K562 (cell line): ENCODE measurements at regions of chr1 and their contacts with region 1.

Region 1: GRCh38 chr1:247119600-247120407 is 15.6 kb upstream of the ZNF669 start:
- DNase-seq: no peak
- ATAC-seq: peak; percentile 50; the same call in 2 of the 3 replicates
- H3K4me3 ChIP-seq: no peak overlapping the region
- H3K27ac ChIP-seq: no peak overlapping the region
- H3K4me1 ChIP-seq: peaks cover 0 to 11% of the 10 kb centered on the region in 2 experiments; a peak in 2 of 5 replicates
- H3K27me3 ChIP-seq: no peaks in the 10 kb centered on the region
- CTCF ChIP-seq: no peak
- EP300 ChIP-seq: no peak
- POLR2A ChIP-seq: no peak
- RAD21 ChIP-seq: no peak

Region 2: DNA sequence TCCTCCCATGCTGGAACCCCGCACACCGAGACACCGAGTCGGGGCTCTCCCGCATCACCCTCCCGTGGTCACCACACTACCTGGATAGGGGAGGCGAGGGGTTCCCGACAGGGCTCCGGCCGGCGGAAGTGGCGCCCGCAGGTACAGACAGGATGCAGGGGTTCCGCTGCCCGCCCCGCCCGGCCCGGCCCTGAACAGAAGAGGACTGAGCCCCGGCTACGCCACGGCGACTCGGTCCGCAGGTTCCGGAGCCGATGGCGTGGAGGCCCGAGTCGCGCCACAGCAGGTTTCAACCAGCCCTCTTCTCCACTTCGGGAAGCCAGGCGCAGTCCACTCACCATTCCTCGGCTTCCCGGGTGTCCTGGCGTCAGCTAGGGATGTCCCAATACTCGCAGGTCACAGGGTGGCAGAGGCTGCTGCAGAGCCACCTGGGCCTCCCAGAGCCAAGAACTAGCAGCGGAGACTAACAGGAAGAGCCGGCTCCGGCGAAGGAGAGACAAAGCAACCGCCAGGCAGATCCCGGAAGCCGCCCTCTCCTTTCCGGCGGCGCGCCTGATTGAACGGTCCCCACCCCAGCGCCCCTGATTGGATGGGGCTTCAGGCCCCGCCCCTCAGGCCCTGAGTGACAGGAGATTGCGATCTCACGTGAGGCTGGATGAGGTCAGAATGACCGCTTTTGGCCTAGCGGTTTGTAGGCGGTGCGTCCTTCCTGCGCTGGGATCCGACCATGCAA is 15.8 kb before region 1 on chr1 and contains the start of gene ZNF669:
- CTCF ChIA-PET with region 1: no interaction called
- POLR2A ChIA-PET with region 1: no interaction called
- in situ Hi-C with region 1: no loop called
- intact Hi-C with region 1: no loop called
- DNase-seq: peak; percentile 98 to 100 (median 99)
- ATAC-seq: peak; percentile 99
- H3K4me3 ChIP-seq: peak within 1 kb of the TSS; percentile 70
- H3K27ac ChIP-seq: peak within 1 kb of the TSS; percentile 88
- H3K4me1 ChIP-seq: peaks cover 9 to 11% of the 10 kb centered on the region in 2 experiments
- H3K27me3 ChIP-seq: no peaks in the 10 kb centered on the region
- CTCF ChIP-seq: no peak
- EP300 ChIP-seq: peak; percentile 72
- POLR2A ChIP-seq: peak; percentile 96
- RAD21 ChIP-seq: no peak
- polyA plus RNA-seq, gene ZNF669: 5.3 to 6.3 TPM

Region 3: DNA sequence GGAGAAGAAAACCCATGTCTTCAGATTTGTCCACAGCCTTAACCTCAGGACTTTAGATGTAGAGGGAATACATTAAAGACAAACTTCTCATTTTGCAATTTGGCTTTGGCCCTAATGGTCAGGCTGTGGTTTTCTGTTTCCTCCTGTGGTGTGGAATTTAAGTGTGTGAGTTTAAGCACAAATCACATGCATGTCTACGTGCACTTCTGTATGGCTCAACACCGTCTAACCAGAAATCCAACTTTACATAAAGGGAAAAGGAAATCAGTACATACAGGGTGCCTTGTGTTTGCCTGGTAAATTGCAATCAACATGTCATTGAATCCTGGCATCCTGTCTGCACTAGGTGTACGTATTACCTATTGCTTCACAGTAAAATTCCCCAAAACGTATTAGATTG is 53.2 kb after region 1 on chr1:
- CTCF ChIA-PET with region 1: no interaction called
- POLR2A ChIA-PET with region 1: no interaction called
- in situ Hi-C with region 1: loop called (anchors 5 kb)
- intact Hi-C with region 1: no loop called
- DNase-seq: no peak
- ATAC-seq: no peak
- H3K4me3 ChIP-seq: no peak overlapping the region
- H3K27ac ChIP-seq: no peak overlapping the region
- H3K4me1 ChIP-seq: no peaks in the 10 kb centered on the region; a peak in 1 of 5 replicates
- H3K27me3 ChIP-seq: peaks cover 0 to 5% of the 10 kb centered on the region in 2 experiments; a peak in 1 of 5 replicates
- CTCF ChIP-seq: no peak
- EP300 ChIP-seq: no peak
- POLR2A ChIP-seq: no peak
- RAD21 ChIP-seq: no peak